RWPE1 (cell line): ENCODE measurements at regions of chr1 and their contacts with region 1.

Region 1: GRCh38 chr1:239997515-239998311 is 94.0 kb upstream of the FMN2 start:
- DNase-seq: no peak
- H3K27ac ChIP-seq: no peak overlapping the region
- CTCF ChIP-seq: peak; percentile 21; the same call in 1 of the 2 replicates

Region 2: DNA sequence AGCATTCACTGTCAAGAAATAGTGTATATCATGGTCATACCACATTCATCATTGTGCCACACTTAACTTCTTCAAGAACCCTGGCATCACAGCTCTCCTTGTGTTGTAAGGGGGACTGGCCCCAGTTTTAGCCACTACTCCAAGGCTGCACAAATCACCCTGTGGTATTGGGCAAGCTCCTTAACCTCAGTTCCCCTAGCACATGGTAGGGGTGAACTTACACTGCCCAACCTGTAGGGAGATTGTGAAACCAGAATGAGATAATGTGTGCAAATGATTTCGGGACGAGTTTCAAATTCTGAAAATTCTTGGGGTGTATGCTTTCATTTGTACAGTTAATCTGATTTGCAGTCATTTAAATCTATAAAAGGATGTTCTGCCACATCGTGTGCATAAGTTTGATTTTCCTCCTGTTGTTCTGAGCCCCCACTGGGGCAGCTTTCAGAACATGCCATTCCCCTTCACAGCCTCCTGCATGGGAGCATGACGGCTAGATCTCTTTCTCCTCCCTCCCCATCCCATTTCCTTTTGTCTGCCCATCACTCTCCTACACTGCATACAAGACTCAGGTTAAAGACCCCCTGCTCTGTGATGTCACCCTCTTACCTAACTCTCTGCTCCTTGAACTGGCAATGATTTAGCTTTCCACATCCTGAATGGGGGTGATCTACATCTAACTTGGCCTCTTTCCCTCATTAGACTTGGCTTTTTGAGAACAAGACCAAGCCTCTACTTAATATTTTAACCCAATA is 321.0 kb before region 1 on chr1:
- CTCF ChIA-PET with region 1: no interaction called
- POLR2A ChIA-PET with region 1: no interaction called
- DNase-seq: no peak
- H3K27ac ChIP-seq: no peak overlapping the region
- CTCF ChIP-seq: no peak

Region 3: GRCh38 chr1:239778221-239778813 is 219.4 kb before region 1 on chr1:
- CTCF ChIA-PET with region 1: no interaction called
- POLR2A ChIA-PET with region 1: no interaction called
- DNase-seq: no peak
- H3K27ac ChIP-seq: no peak overlapping the region
- CTCF ChIP-seq: no peak

Region 4: DNA sequence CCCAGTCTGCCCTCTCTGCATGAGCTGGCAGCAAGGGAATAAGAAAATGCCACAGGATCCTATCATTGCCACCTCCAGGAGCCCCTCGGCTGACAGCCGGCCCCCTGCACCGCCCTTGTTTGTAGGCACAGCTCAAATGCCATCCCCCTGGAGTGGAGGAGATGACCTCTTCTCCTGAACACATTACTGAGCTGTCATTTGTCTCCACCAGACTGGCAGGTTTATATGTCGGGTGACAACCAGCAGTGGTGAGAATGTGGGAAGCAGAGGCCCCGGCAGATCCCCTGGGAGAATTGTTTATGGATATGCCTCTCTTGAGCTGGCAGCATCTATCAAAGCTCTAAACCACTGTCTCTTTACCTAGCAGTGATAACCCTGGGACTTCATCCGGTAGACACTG is 41.5 kb before region 1 on chr1:
- CTCF ChIA-PET with region 1: no interaction called
- POLR2A ChIA-PET with region 1: no interaction called
- DNase-seq: no peak
- H3K27ac ChIP-seq: no peak overlapping the region
- CTCF ChIP-seq: no peak

Region 5: DNA sequence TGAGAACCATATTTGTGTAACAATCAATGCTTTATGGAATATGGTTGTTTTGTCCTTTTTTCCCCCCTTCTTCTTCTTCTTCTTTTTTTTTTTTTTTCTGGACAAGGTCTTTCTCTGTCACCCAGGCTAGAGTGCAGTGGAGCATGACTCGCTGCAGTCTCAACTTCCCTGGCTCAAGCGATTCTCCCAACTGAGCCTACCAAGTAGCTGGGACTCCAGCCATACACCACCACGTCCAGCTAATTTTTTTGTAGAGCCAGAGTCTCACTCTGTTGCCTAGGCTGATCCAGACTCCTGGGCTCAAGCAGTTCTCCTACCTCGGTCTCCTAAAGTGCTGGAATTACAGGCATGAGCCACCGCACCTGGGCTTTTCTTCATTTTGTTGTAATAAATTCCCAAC is 180.7 kb after region 1 on chr1:
- CTCF ChIA-PET with region 1: interaction called, 4 read pairs
- POLR2A ChIA-PET with region 1: interaction called, 10 read pairs
- DNase-seq: no peak
- H3K27ac ChIP-seq: no peak overlapping the region
- CTCF ChIP-seq: no peak